K562 (cell line): ENCODE measurements at regions of chr10 and their contacts with region 1.

Region 1: DNA sequence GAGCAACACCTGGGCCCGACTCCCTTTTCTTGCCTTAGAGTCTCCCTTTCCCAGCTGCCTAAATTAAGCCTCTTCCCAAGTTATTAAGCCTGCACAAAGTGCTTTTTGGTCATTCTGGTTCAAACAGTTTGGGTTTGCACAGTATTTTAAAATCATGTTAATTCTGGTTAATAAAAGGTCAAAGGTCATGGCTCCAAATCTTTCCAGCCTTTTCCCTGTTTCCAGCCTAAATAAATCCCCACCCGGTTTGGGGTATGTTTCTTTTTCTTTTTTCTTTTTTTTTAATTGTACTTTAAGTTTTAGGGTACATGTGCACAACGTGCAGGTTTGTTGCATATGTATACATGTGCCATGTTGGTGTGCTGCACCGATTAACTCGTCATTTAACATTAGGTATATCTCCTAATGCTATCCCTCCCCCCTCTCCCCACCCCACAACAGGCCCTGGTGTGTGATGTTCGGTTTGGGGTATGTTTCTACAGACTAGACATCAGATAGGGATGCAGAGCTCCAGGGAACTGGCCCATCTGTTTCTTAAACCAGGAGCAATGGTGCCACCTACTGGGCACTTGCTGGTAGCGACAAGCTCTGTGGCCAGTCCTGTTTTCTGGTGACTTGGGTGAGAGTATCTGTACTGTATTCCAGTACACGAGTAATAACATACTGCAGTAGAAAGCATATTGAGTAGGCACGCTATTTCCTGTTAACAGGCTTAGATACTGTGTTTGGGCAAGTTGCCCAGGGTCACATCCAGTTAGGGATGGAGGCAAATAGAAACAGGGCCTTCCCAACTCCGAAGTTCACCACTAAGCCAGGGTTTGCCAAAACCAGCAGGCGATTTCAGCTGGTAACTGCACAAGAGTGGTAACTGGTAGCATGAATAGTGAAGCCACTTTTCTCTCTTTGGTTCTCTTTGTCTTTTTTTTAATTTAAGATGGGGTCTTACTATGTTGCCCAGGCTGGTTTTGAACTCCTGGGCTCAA is 60.6 kb upstream of the TRIM8 start:
- DNase-seq: peak; percentile 82 to 88 (median 84)
- ATAC-seq: peak; percentile 99
- H3K4me3 ChIP-seq: no peak overlapping the region
- H3K27ac ChIP-seq: no peak overlapping the region
- H3K4me1 ChIP-seq: peaks cover 0 to 3% of the 10 kb centered on the region in 2 experiments; a peak in 2 of 5 replicates
- H3K27me3 ChIP-seq: no peaks in the 10 kb centered on the region
- CTCF ChIP-seq: peak; percentile 70 to 85 (median 77)
- EP300 ChIP-seq: no peak
- POLR2A ChIP-seq: no peak
- RAD21 ChIP-seq: peak; percentile 71 to 82

Region 2: GRCh38 chr10:102245101-102245931 is 338.4 kb before region 1 on chr10 and contains the start of gene GBF1:
- CTCF ChIA-PET with region 1: no interaction called
- POLR2A ChIA-PET with region 1: no interaction called
- in situ Hi-C with region 1: loop called (anchors 25 kb)
- intact Hi-C with region 1: no loop called
- DNase-seq: peak; percentile 86 to 97 (median 92)
- ATAC-seq: peak; percentile 92
- H3K4me3 ChIP-seq: peak within 1 kb of the TSS; percentile 84
- H3K27ac ChIP-seq: peak within 1 kb of the TSS; percentile 75
- H3K4me1 ChIP-seq: peaks cover 15 to 25% of the 10 kb centered on the region in 2 experiments
- H3K27me3 ChIP-seq: peaks cover 0 to 3% of the 10 kb centered on the region in 2 experiments; a peak in 1 of 5 replicates
- CTCF ChIP-seq: no peak
- EP300 ChIP-seq: no peak
- POLR2A ChIP-seq: peak; percentile 90
- RAD21 ChIP-seq: no peak
- polyA plus RNA-seq, gene GBF1: 0.69 to 1.3 TPM

Region 3: GRCh38 chr10:102394079-102394800 is 189.5 kb before region 1 on chr10:
- CTCF ChIA-PET with region 1: no interaction called
- POLR2A ChIA-PET with region 1: no interaction called
- in situ Hi-C with region 1: loop called (anchors 25 kb)
- intact Hi-C with region 1: loop called (anchors 1 kb)
- DNase-seq: peak; percentile 87 to 93 (median 90)
- ATAC-seq: peak; percentile 93
- H3K4me3 ChIP-seq: peak overlapping the region; percentile 78
- H3K27ac ChIP-seq: peak overlapping the region; percentile 66
- H3K4me1 ChIP-seq: peaks cover 14 to 40% of the 10 kb centered on the region in 2 experiments; a peak in 4 of 5 replicates
- H3K27me3 ChIP-seq: no peaks in the 10 kb centered on the region
- CTCF ChIP-seq: peak in 1 of 3 experiments; percentile 95; a peak in 1 of 6 replicates
- EP300 ChIP-seq: no peak
- POLR2A ChIP-seq: peak; percentile 59; the same call in 1 of the 2 replicates
- RAD21 ChIP-seq: peak; percentile 76

Region 4: DNA sequence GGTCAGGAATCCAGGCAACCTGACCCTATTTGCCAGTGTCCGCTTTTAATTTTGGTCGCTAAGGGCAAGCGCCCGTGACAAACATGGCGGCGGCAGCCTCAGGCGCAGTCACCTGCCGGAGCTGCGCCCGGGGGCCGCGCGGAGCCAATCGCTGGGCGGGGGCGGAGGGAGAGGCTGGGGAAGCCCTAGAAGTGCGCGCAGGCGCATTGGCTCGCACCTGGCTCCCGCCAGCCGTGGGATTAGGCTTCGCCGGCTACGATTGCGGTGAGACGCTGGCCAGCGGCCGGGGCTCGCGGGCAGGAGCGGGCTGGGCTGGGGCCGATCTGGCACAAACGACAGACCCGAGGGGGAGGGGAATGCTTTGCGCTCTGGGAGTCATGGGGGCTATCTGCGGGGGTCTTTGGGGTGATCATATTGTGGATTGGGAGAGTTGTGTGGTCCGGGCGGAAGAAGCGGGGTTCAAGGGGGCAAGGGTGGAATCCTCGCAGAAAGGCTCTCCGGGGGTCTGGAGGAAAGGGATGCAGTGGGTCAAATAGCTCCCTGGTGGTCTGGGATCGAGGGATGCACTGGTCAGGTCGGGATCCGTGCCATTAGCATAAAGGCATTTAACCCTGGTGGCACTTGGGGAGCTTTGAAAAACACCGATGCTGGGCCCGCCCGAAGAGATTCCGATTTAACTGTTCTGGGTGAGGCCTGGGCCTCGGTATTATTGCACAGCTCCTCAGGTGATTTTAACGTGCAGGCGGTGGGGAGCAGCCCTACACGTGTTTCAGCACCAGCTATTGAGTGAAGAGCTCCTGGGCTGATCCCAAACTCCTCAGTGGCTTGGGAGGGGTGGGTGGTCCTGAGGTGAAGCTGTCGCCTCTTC is 122.3 kb before region 1 on chr10:
- CTCF ChIA-PET with region 1: no interaction called
- POLR2A ChIA-PET with region 1: no interaction called
- in situ Hi-C with region 1: no loop called
- intact Hi-C with region 1: no loop called
- DNase-seq: peak; percentile 94 to 97 (median 96)
- ATAC-seq: peak; percentile 91
- H3K4me3 ChIP-seq: peak overlapping the region; percentile 41
- H3K27ac ChIP-seq: peak overlapping the region; percentile 73
- H3K4me1 ChIP-seq: peaks cover 21 to 26% of the 10 kb centered on the region in 2 experiments
- H3K27me3 ChIP-seq: no peaks in the 10 kb centered on the region
- CTCF ChIP-seq: no peak
- EP300 ChIP-seq: no peak
- POLR2A ChIP-seq: peak; percentile 55; the same call in 1 of the 2 replicates
- RAD21 ChIP-seq: no peak